AG04450 (cell line): ENCODE measurements at regions of chr18 and their contacts with region 1.

Region 1: DNA sequence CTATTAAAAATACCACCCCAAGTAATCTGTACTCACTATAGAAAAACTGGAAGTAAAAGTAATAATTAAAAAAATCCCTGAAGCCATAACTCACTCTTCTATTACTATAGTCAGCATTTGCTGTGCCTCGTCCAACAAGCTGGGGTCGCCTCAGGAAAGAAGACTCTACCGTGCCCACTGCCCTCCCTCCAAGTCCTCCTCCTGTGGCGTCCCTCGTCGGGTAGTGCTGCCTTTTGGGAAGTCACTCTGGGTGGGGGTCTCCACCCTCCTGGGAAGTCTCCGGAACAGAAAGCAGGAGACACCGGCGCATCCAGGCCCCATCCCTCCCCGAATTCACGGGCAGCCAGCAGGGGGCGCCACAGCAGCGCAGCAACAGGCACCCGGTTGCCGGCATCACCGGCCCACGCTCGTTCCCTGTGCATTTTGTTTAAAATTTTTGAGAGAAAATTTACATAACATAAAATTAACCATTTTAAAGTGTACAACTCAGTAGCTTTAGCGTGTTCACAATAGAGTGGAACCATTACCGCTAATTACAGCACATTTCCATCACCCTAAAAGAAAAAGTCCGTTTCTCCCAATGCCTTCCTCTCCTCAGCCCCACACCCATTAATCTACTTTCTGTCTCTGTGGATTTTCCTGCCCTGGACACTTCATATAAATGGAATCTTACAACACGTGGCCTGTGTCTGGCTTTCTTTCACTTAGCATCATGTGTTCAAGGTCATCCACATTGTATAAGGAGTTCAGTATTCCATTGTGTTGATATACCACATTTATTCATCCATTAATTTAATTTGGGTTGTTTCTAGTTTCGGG is 62.2 kb downstream of the ADNP2 start:
- DNase-seq: peak; percentile 24
- H3K4me3 ChIP-seq: peak overlapping the region; percentile 27; the same call in 1 of the 2 replicates
- H3K27ac ChIP-seq: peak overlapping the region; percentile 11
- H3K27me3 ChIP-seq: no peaks in the 10 kb centered on the region
- CTCF ChIP-seq: peak; percentile 80

Region 2: DNA sequence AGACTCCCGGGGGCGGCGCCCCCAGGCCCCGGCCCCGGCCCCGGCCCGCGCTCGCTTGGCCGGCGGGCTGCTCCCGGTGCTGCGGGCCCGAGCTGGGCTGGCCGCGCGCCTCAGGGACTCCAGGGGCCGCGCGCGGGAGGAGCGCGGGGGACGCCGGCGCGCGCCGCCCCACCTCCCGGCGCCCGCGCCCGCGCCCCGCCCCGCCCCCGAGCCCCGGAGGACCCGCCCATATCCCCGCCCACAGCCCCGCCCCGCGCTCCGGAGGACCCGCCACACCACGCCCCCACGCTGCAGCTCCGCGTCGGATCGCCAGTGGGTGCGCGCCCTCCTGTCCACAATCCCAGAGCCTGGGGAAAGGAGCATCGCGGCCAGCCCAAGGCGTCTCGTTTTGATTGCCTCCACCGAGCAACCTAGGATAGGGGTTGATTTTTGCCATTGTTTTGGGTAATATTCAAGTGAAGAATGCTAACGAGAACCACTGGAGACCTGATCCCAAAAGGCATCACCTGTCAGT is 76.2 kb after region 1 on chr18 and contains the start of gene PARD6G:
- CTCF ChIA-PET with region 1: interaction called, 10 read pairs
- POLR2A ChIA-PET with region 1: no interaction called
- DNase-seq: peak; percentile 20
- H3K4me3 ChIP-seq: peak within 1 kb of the TSS; percentile 73
- H3K27ac ChIP-seq: no peak within 1 kb of the TSS
- H3K27me3 ChIP-seq: peaks cover 3% of the 10 kb centered on the region
- CTCF ChIP-seq: peak; percentile 27; the same call in 1 of the 2 replicates
- polyA plus RNA-seq, gene PARD6G: 9.6 and 11.2 TPM in 2 replicates